ENCODE measurements at regions of chr6 and their contacts with region 1.

Region 1: DNA sequence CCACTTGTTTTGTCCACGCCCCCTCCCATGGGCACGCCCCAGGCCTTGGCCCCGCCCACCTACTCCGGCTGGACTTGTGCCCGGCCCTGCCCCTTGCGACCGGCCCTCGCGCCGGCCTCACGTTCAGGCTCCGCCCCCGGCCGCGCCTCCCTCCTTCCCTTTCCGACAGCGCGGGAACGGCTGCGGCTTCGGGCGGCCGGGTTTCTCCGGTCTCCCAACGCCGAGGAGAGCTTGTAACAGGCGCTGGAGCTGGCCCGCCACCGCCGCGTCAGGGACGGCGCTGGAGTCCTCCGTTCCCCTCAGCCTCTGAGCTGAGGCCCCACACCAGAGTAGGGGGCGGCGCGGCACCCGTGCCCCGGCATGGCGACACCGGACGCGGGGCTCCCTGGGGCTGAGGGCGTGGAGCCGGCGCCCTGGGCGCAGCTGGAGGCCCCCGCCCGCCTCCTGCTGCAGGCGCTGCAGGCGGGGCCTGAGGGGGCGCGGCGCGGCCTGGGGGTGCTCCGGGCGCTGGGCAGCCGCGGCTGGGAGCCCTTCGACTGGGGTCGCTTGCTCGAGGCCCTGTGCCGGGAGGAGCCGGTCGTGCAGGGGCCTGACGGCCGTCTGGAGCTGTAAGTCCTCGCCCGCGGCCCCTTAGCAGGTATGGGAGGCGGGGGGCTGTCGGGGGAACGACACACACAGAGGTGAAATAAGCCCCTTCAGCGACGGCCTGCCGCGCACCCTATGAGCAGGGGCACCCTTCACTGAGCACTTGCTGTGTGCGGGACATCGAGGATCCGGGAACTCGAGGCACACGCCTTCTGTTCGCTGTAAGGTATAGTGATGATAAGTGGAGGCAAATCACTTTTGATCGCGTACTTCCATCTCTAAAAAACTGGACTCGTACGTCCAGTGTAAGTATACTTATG is at the start of gene FANCE:
- DNase-seq: peak; percentile 94 to 98 (median 98)
- ATAC-seq: peak; percentile 97 to 98
- H3K4me3 ChIP-seq: peak within 1 kb of the TSS; percentile 38
- H3K27ac ChIP-seq: no peak within 1 kb of the TSS
- H3K4me1 ChIP-seq: no peaks in the 10 kb centered on the region
- H3K27me3 ChIP-seq: no peaks in the 10 kb centered on the region
- total RNA-seq, gene FANCE: 1.3 to 4.7 (median 3.1) TPM

Region 2: DNA sequence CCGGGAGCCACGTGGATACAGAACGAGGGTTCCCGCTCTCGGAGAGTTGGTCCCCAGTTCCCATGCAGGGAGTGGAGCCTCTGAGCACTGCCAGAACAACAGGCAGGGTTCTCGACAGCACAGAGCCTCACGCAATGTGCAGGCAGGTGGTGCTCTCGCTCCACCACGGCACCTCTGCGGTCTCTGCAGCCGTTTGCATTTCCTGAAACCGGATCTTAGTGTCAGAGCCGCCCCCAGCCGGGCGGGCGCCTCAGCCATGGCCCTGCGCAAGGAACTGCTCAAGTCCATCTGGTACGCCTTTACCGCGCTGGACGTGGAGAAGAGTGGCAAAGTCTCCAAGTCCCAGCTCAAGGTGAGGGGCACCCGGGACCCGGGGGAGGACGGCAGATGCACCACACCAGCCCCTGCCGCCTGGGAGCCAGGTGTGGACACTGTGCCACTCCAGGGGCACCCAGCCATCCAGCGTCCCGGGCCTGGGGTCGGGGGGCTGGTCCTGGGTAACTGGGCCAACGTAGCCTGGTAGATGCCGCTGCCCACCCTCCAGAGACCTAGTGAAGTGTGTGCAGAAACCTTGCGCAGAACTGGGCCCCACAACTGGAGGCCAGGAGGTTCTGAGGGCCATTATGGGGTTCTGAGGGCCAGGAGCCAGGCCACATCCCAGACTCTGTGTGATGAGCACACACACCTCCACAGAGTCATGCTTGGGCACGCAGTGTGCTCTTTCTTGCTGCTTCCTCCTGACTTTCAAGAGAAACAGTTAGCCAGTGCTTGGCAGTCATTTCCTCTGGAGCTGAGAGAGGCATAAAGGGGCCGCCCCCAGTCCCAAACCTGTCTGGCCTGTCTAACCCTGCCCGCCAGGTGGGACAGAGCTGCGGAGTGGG is 154.6 kb before region 1 on chr6 and contains the start of gene DEF6:
- intact Hi-C with region 1: loop called in 1 of 4 experiments (anchors 5 kb)
- DNase-seq: peak; percentile 82 to 94 (median 93)
- ATAC-seq: peak; percentile 94
- H3K4me3 ChIP-seq: no peak within 1 kb of the TSS
- H3K27ac ChIP-seq: no peak within 1 kb of the TSS
- H3K4me1 ChIP-seq: no peaks in the 10 kb centered on the region
- H3K27me3 ChIP-seq: no peaks in the 10 kb centered on the region
- total RNA-seq, gene DEF6: 2.2 to 3.6 (median 2.7) TPM

Region 3: GRCh38 chr6:35342258-35343091 is 110.0 kb before region 1 on chr6 and contains the start of gene PPARD:
- intact Hi-C with region 1: loop called (anchors 2 to 5 kb)
- DNase-seq: peak; percentile 98 to 100 (median 99)
- ATAC-seq: peak; percentile 99
- H3K4me3 ChIP-seq: peak within 1 kb of the TSS; percentile 77
- H3K27ac ChIP-seq: peak within 1 kb of the TSS; percentile 72
- H3K4me1 ChIP-seq: no peaks in the 10 kb centered on the region
- H3K27me3 ChIP-seq: no peaks in the 10 kb centered on the region
- total RNA-seq, gene PPARD: 20.5 to 22.6 (median 21.3) TPM

Region 4: DNA sequence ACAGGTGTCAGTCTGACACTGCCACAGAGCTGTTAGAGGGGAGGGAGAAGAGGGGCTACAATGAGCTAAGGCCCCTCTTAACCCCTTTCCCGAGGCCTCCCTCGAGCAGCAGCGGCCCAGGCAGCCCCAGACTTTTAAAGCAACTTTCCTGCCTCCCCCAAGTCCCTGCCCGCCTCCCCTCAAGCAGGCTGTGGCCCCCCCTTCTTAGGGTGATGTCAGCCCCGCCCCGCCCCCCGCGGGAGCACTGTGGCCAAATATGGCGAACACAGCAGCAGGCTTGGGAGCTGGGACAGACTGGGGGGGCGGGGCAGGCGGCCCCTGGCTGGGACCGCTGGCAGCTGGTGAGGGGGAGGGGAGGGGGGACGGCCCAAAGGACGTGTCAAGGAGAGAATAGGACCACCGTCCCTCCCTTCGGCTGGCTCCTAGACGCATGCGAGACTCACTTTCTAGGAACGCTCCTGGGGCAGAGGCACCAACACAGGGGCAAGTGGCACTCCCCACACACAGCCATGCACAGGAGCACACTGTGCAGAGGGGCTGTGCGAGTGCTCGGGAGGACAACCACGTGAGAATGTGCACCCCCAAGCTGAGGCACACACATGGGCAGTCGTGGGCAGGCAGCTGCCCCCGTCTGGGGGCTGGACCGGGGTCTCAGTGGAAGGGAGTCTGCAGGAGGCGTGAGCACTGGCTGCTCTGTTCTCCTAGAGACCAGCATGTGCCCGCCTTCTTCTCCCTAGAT is 37.7 kb after region 1 on chr6:
- intact Hi-C with region 1: no loop called
- DNase-seq: peak; percentile 88 to 96 (median 94)
- ATAC-seq: peak; percentile 66 to 68
- H3K4me3 ChIP-seq: no peak overlapping the region
- H3K27ac ChIP-seq: peak overlapping the region; percentile 79
- H3K4me1 ChIP-seq: peaks cover 13% of the 10 kb centered on the region
- H3K27me3 ChIP-seq: no peaks in the 10 kb centered on the region

Measured in right cardiac atrium (tissue), 5 donors.